Natural killer cell (primary cell): ENCODE measurements at regions of chr17 and their contacts with region 1.

Region 1: GRCh38 chr17:57243171-57243948 is 13.0 kb upstream of the MSI2 start:
- DNase-seq: peak; percentile 74 to 90
- ATAC-seq: peak; percentile 91 to 99 (median 99)
- H3K4me3 ChIP-seq: no peak overlapping the region
- H3K4me3 Mint-ChIP-seq: no peak overlapping the region
- H3K27ac ChIP-seq: no peak overlapping the region
- H3K27ac Mint-ChIP-seq: no peak overlapping the region
- H3K4me1 ChIP-seq: no peaks in the 10 kb centered on the region
- H3K4me1 Mint-ChIP-seq: peaks cover 8% of the 10 kb centered on the region in 2 donors
- H3K27me3 ChIP-seq: no peaks in the 10 kb centered on the region
- H3K27me3 Mint-ChIP-seq: peaks cover 24 to 49% of the 10 kb centered on the region in 2 donors
- CTCF ChIP-seq: peak; percentile 100

Region 2: GRCh38 chr17:57671667-57672632 is 428.6 kb after region 1 on chr17:
- intact Hi-C with region 1: loop called (anchors 1 kb)
- DNase-seq: peak; percentile 52 to 85
- ATAC-seq: peak; percentile 80 to 92 (median 87)
- H3K4me3 ChIP-seq: no peak overlapping the region
- H3K4me3 Mint-ChIP-seq: peak overlapping the region; percentile 35
- H3K27ac ChIP-seq: peak overlapping the region; percentile 8
- H3K27ac Mint-ChIP-seq: peak overlapping the region; percentile 31 to 43
- H3K4me1 ChIP-seq: peaks cover 26% of the 10 kb centered on the region
- H3K4me1 Mint-ChIP-seq: peaks cover 17 to 32% of the 10 kb centered on the region in 2 donors
- H3K27me3 ChIP-seq: no peaks in the 10 kb centered on the region
- H3K27me3 Mint-ChIP-seq: no peaks in the 10 kb centered on the region
- CTCF ChIP-seq: peak; percentile 92

Region 3: DNA sequence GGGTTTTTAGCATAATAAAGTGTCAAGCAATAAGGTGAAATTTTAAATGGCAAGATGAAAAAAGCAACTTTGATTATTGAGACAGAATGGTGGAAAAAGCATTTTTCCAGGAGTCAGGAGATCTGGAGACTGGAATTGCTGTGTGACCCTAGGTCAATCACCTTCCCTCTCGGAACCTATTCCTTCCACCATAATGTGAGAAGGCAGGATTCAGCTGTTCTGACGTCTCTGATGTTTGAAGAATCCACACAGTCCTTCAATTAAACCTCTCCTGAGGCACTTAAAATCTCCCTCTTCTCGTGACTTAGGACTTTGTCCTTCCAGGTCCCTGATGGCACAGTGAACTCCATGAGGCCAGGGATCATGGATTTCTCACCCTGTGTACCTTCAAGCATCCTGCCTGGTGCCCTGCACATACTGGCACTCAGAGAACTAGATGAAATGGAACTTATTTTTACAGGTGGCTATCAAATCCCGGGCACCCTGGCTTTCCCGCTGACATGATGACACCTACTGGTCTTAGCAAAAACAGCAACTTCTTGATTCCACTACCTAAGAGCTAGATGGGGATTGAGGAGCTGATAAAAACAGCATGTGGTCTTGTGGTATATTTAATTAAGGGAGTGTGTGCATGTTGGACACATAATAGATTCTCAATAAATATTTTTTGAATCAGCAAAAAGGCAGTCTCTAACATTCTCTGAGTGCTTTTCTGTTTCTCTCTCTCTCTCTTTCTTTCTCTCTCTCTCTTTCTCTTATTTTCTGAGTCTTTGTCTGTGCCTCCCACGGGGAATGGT is 504.1 kb after region 1 on chr17:
- intact Hi-C with region 1: loop called (anchors 1 kb)
- DNase-seq: peak in 1 of 2 donors; percentile 78
- ATAC-seq: peak; percentile 40 to 73 (median 68)
- H3K4me3 ChIP-seq: no peak overlapping the region
- H3K4me3 Mint-ChIP-seq: no peak overlapping the region
- H3K27ac ChIP-seq: no peak overlapping the region
- H3K27ac Mint-ChIP-seq: no peak overlapping the region
- H3K4me1 ChIP-seq: peaks cover 15% of the 10 kb centered on the region
- H3K4me1 Mint-ChIP-seq: peaks cover 7 to 15% of the 10 kb centered on the region in 2 donors
- H3K27me3 ChIP-seq: no peaks in the 10 kb centered on the region
- H3K27me3 Mint-ChIP-seq: peaks cover 16 to 25% of the 10 kb centered on the region in 2 donors
- CTCF ChIP-seq: peak; percentile 69

Region 4: GRCh38 chr17:57833179-57833939 is 590.0 kb after region 1 on chr17:
- intact Hi-C with region 1: loop called (anchors 1 kb)
- DNase-seq: peak; percentile 44 to 88
- ATAC-seq: peak; percentile 74 to 85 (median 81)
- H3K4me3 ChIP-seq: peak overlapping the region; percentile 20
- H3K4me3 Mint-ChIP-seq: no peak overlapping the region
- H3K27ac ChIP-seq: no peak overlapping the region
- H3K27ac Mint-ChIP-seq: no peak overlapping the region
- H3K4me1 ChIP-seq: peaks cover 7% of the 10 kb centered on the region
- H3K4me1 Mint-ChIP-seq: no peaks in the 10 kb centered on the region
- H3K27me3 ChIP-seq: no peaks in the 10 kb centered on the region
- H3K27me3 Mint-ChIP-seq: no peaks in the 10 kb centered on the region
- CTCF ChIP-seq: peak; percentile 94